K562 (cell line): ENCODE measurements at regions of chr7 and their contacts with region 1.

Region 1: DNA sequence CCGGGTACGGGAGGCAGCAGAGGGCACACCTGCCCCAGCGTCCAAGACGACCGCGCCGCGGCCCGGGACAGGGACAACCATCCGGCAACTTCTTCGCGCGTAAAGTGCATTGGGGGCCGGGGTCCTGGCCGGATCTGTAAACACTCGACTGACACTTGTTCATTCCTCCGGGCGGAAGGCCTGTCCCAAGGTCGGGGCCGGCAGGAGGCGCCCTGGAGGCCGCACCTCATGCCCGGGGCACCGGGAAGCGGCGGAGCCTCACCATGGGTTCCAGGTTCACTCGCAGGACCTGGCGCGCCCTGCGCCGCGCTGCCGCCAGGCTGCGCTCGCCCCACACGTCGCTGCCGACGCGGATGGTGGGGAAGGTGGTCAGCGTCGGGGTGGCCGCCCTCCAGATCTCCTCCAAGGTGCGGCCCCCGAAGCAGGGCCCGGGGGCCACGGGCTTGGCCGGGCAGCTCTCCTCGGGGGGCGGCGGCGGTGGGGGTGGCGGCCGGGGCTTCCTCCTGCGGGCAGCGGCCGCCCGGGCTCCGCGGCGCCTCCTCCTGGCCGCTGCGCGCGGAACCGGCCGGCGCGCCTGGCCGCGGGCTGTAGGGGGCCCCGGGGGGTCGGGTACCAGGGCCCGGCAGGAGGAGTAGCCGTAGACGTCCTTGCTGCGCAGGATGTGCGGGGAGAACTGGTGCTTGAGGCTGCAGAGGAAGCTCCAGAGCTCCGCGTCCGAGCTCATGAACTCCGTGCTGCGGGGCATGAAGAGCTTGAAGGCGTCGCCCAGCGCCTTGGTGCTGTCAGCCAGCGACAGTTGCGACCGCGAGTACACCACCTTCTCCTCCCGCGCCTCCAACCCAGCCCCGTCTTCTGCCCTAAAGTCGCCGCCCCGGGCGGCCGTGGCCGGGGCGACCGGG is 746 bp downstream of the CCDC71L start:
- DNase-seq: peak; percentile 89 to 94 (median 90)
- ATAC-seq: peak; percentile 78
- H3K4me3 ChIP-seq: peak overlapping the region; percentile 73
- H3K27ac ChIP-seq: peak overlapping the region; percentile 92
- H3K4me1 ChIP-seq: peaks cover 11 to 38% of the 10 kb centered on the region in 2 experiments; a peak in 4 of 5 replicates
- H3K27me3 ChIP-seq: no peaks in the 10 kb centered on the region
- CTCF ChIP-seq: peak; percentile 97 to 99 (median 98)
- EP300 ChIP-seq: peak; percentile 68
- POLR2A ChIP-seq: peak; percentile 55
- RAD21 ChIP-seq: peak; percentile 91 to 98

Region 2: GRCh38 chr7:106176414-106177299 is 483.6 kb before region 1 on chr7:
- CTCF ChIA-PET with region 1: interaction called, 7 read pairs
- POLR2A ChIA-PET with region 1: interaction called, 3 read pairs
- in situ Hi-C with region 1: loop called (anchors 5 kb)
- intact Hi-C with region 1: loop called (anchors 1 kb)
- DNase-seq: peak; percentile 90 to 92 (median 90)
- ATAC-seq: peak; percentile 95
- H3K4me3 ChIP-seq: no peak overlapping the region
- H3K27ac ChIP-seq: no peak overlapping the region
- H3K4me1 ChIP-seq: peaks cover 0 to 5% of the 10 kb centered on the region in 2 experiments; a peak in 3 of 5 replicates
- H3K27me3 ChIP-seq: no peaks in the 10 kb centered on the region
- CTCF ChIP-seq: peak; percentile 94 to 99 (median 99)
- EP300 ChIP-seq: no peak
- POLR2A ChIP-seq: no peak
- RAD21 ChIP-seq: peak; percentile 100

Region 3: DNA sequence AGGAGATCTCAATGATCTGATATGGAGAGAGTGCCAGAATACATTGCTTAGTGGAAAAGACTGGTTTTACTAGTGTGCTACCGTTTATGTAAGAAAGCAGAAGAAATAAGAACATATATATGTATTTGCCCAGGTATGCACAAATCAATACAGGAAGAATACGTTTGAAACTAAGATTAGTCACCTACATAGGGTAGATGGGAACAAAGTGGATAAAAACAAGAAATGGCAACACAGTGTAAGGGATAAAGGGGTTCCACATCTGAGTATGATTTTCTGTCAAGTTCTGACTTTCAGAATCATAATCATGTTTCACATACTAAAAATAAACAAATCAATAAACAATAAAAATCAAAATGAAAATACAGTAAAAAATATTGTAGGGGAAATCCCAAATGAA is 226.8 kb before region 1 on chr7:
- CTCF ChIA-PET with region 1: no interaction called
- POLR2A ChIA-PET with region 1: no interaction called
- in situ Hi-C with region 1: no loop called
- intact Hi-C with region 1: no loop called
- DNase-seq: no peak
- ATAC-seq: no peak
- H3K4me3 ChIP-seq: no peak overlapping the region
- H3K27ac ChIP-seq: no peak overlapping the region
- H3K4me1 ChIP-seq: no peaks in the 10 kb centered on the region
- H3K27me3 ChIP-seq: no peaks in the 10 kb centered on the region; a peak in 2 of 5 replicates
- CTCF ChIP-seq: no peak
- EP300 ChIP-seq: no peak
- POLR2A ChIP-seq: no peak
- RAD21 ChIP-seq: no peak

Region 4: GRCh38 chr7:106542550-106543220 is 117.5 kb before region 1 on chr7:
- CTCF ChIA-PET with region 1: interaction called, 24 read pairs
- POLR2A ChIA-PET with region 1: interaction called, 26 read pairs
- in situ Hi-C with region 1: loop called (anchors 5 kb)
- intact Hi-C with region 1: loop called (anchors 1 kb)
- DNase-seq: peak; percentile 77 to 96 (median 84)
- ATAC-seq: peak; percentile 96
- H3K4me3 ChIP-seq: no peak overlapping the region
- H3K27ac ChIP-seq: peak overlapping the region; percentile 30
- H3K4me1 ChIP-seq: peaks cover 0 to 22% of the 10 kb centered on the region in 2 experiments; a peak in 2 of 5 replicates
- H3K27me3 ChIP-seq: no peaks in the 10 kb centered on the region
- CTCF ChIP-seq: peak; percentile 95 to 98 (median 98)
- EP300 ChIP-seq: peak; percentile 63
- POLR2A ChIP-seq: no peak
- RAD21 ChIP-seq: peak; percentile 100

Region 5: DNA sequence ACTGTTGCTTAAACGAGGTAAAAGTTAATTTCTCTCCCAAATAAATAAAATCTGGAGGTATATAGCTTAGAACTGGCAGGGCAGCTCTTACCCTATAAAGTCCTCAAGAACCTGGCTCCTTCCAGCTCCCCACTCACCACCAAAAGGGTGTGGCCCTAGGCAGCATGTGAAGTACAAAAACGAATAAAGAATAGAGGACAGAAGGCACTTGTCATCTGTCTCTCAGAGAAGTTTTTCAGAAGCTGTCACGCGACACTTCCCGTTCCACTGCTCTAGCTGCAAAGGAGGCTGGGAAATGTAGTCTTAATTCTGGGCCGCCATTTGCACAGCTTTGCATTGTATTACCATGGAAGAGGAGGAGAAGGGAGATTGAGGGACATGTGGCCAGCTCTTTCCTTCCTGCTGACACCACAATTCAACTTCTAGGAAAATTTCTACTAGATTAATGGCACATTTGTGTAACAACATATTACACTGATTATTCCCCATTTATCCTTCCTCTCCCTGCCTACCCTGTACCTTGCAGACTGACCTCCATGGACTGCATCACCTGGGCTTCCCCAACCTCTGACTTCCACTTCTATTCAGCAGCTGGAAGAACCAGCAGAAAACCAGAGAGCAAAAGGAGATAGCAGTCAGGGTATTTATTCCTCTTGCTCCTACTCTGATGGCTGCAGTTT is 61.4 kb before region 1 on chr7:
- CTCF ChIA-PET with region 1: no interaction called
- POLR2A ChIA-PET with region 1: interaction called, 5 read pairs
- in situ Hi-C with region 1: no loop called
- intact Hi-C with region 1: loop called (anchors 2 kb)
- DNase-seq: peak; percentile 83 to 97 (median 87)
- ATAC-seq: peak; percentile 97
- H3K4me3 ChIP-seq: no peak overlapping the region
- H3K27ac ChIP-seq: peak overlapping the region; percentile 62
- H3K4me1 ChIP-seq: peaks cover 19 to 56% of the 10 kb centered on the region in 2 experiments
- H3K27me3 ChIP-seq: no peaks in the 10 kb centered on the region
- CTCF ChIP-seq: no peak
- EP300 ChIP-seq: peak; percentile 55; the same call in 1 of the 2 replicates
- POLR2A ChIP-seq: no peak
- RAD21 ChIP-seq: no peak

Region 6: GRCh38 chr7:106717955-106718871 is 58.0 kb after region 1 on chr7:
- CTCF ChIA-PET with region 1: interaction called, 3 read pairs
- POLR2A ChIA-PET with region 1: no interaction called
- in situ Hi-C with region 1: no loop called
- intact Hi-C with region 1: loop called (anchors 1 kb)
- DNase-seq: peak; percentile 75 to 90 (median 80)
- ATAC-seq: peak; percentile 85
- H3K4me3 ChIP-seq: no peak overlapping the region
- H3K27ac ChIP-seq: peak overlapping the region; percentile 67
- H3K4me1 ChIP-seq: peaks cover 3 to 64% of the 10 kb centered on the region in 2 experiments; a peak in 4 of 5 replicates
- H3K27me3 ChIP-seq: no peaks in the 10 kb centered on the region
- CTCF ChIP-seq: no peak
- EP300 ChIP-seq: peak; percentile 94
- POLR2A ChIP-seq: no peak
- RAD21 ChIP-seq: peak; percentile 26

Region 7: GRCh38 chr7:106865130-106866041 is 205.2 kb after region 1 on chr7 and contains the start of gene PIK3CG:
- CTCF ChIA-PET with region 1: no interaction called
- POLR2A ChIA-PET with region 1: no interaction called
- in situ Hi-C with region 1: no loop called
- intact Hi-C with region 1: loop called (anchors 2 kb)
- DNase-seq: peak in 2 of 4 experiments; percentile 65 to 67
- ATAC-seq: peak; percentile 52
- H3K4me3 ChIP-seq: peak within 1 kb of the TSS; percentile 48
- H3K27ac ChIP-seq: peak within 1 kb of the TSS; percentile 79
- H3K4me1 ChIP-seq: peaks cover 15 to 53% of the 10 kb centered on the region in 2 experiments
- H3K27me3 ChIP-seq: no peaks in the 10 kb centered on the region
- CTCF ChIP-seq: no peak; a peak in 1 of 6 replicates
- EP300 ChIP-seq: peak; percentile 54
- POLR2A ChIP-seq: peak; percentile 74
- RAD21 ChIP-seq: no peak
- polyA plus RNA-seq, gene PIK3CG: 5.3 to 6.2 TPM

Region 8: DNA sequence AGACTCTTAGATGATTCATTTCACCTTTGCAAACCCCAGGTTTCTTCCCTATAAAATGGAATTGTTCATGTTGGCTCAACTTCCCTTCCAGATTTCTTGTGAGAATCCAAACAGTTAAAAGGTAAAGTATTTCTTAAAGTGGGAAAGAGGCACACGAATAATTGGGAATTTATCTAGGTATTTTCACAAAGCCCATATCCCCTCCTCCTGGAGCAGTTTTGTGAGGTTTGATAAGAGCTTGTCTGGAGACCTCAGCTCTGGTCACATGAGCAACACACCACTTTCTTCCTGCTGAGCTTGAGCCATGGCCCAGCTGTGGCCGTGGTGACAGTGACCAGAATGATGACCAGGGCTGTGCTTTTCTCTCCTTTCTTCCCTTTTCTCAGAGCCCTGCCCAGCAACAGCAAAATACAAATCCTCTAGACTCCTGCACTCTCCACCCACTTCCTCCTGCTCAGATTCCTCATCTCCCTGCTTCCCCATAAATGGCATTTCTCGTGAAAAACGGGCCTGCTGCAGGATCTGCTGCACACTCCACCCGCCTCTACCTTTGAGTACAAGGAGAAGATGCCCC is 292.5 kb after region 1 on chr7:
- CTCF ChIA-PET with region 1: no interaction called
- POLR2A ChIA-PET with region 1: no interaction called
- in situ Hi-C with region 1: no loop called
- intact Hi-C with region 1: no loop called
- DNase-seq: peak; percentile 66 to 95 (median 78)
- ATAC-seq: peak; percentile 92
- H3K4me3 ChIP-seq: no peak overlapping the region
- H3K27ac ChIP-seq: peak overlapping the region; percentile 45
- H3K4me1 ChIP-seq: peaks cover 19 to 34% of the 10 kb centered on the region in 2 experiments
- H3K27me3 ChIP-seq: no peaks in the 10 kb centered on the region
- CTCF ChIP-seq: no peak
- EP300 ChIP-seq: peak; percentile 84
- POLR2A ChIP-seq: no peak
- RAD21 ChIP-seq: peak; percentile 24 to 46

Region 9: GRCh38 chr7:107404740-107405537 is 744.7 kb after region 1 on chr7:
- CTCF ChIA-PET with region 1: no interaction called
- POLR2A ChIA-PET with region 1: no interaction called
- in situ Hi-C with region 1: no loop called
- intact Hi-C with region 1: no loop called
- DNase-seq: no peak
- ATAC-seq: peak; percentile 50
- H3K4me3 ChIP-seq: no peak overlapping the region
- H3K27ac ChIP-seq: peak overlapping the region; percentile 13; the same call in 2 of the 3 replicates
- H3K4me1 ChIP-seq: no peaks in the 10 kb centered on the region
- H3K27me3 ChIP-seq: no peaks in the 10 kb centered on the region
- CTCF ChIP-seq: no peak
- EP300 ChIP-seq: no peak
- POLR2A ChIP-seq: no peak
- RAD21 ChIP-seq: no peak